B cell (primary cell): ENCODE measurements at regions of chr16 and their contacts with region 1.

Region 1: GRCh38 chr16:47460711-47461597 is at the starts of genes ITFG1 and PHKB:
- DNase-seq: peak; percentile 97
- ATAC-seq: peak; percentile 89
- H3K4me3 ChIP-seq: peak within 1 kb of the TSS; percentile 73 to 93 (median 88)
- H3K4me3 Mint-ChIP-seq: peak within 1 kb of the TSS; percentile 98
- H3K27ac ChIP-seq: peak within 1 kb of the TSS; percentile 94 to 97
- H3K27ac Mint-ChIP-seq: peak within 1 kb of the TSS; percentile 97
- H3K4me1 ChIP-seq: peaks cover 40 to 53% of the 10 kb centered on the region in 2 donors
- H3K4me1 Mint-ChIP-seq: peaks cover 68% of the 10 kb centered on the region
- H3K27me3 ChIP-seq: no peaks in the 10 kb centered on the region
- H3K27me3 Mint-ChIP-seq: no peaks in the 10 kb centered on the region
- CTCF ChIP-seq: no peak
- total RNA-seq, gene ITFG1: 40.4 and 47.5 TPM in 2 replicates
- total RNA-seq, gene PHKB: 223 and 228 TPM in 2 replicates

Region 2: GRCh38 chr16:47323241-47323640 is 137.7 kb before region 1 on chr16:
- CTCF ChIA-PET with region 1: no interaction called
- POLR2A ChIA-PET with region 1: no interaction called
- intact Hi-C with region 1: no loop called
- DNase-seq: no peak
- ATAC-seq: no peak
- H3K4me3 ChIP-seq: no peak overlapping the region
- H3K4me3 Mint-ChIP-seq: no peak overlapping the region
- H3K27ac ChIP-seq: no peak overlapping the region
- H3K27ac Mint-ChIP-seq: no peak overlapping the region
- H3K4me1 ChIP-seq: no peaks in the 10 kb centered on the region
- H3K4me1 Mint-ChIP-seq: no peaks in the 10 kb centered on the region
- H3K27me3 ChIP-seq: no peaks in the 10 kb centered on the region
- H3K27me3 Mint-ChIP-seq: no peaks in the 10 kb centered on the region
- CTCF ChIP-seq: no peak

Region 3: GRCh38 chr16:47481698-47482374 is 20.9 kb after region 1 on chr16:
- CTCF ChIA-PET with region 1: interaction called, 10 read pairs
- POLR2A ChIA-PET with region 1: interaction called, 12 read pairs
- intact Hi-C with region 1: loop called (anchors 1 kb)
- DNase-seq: no peak
- ATAC-seq: peak; percentile 89
- H3K4me3 ChIP-seq: no peak overlapping the region
- H3K4me3 Mint-ChIP-seq: peak overlapping the region; percentile 69
- H3K27ac ChIP-seq: peak overlapping the region in 1 of 2 donors; percentile 52
- H3K27ac Mint-ChIP-seq: peak overlapping the region; percentile 89
- H3K4me1 ChIP-seq: peaks cover 17 to 23% of the 10 kb centered on the region in 2 donors
- H3K4me1 Mint-ChIP-seq: peaks cover 54% of the 10 kb centered on the region
- H3K27me3 ChIP-seq: no peaks in the 10 kb centered on the region
- H3K27me3 Mint-ChIP-seq: no peaks in the 10 kb centered on the region
- CTCF ChIP-seq: no peak

Region 4: GRCh38 chr16:47492428-47493377 is 31.7 kb after region 1 on chr16:
- CTCF ChIA-PET with region 1: interaction called, 50 read pairs
- POLR2A ChIA-PET with region 1: interaction called, 41 read pairs
- intact Hi-C with region 1: loop called (anchors 1 kb)
- DNase-seq: peak; percentile 72
- ATAC-seq: peak; percentile 85
- H3K4me3 ChIP-seq: peak overlapping the region; percentile 19 to 71 (median 37)
- H3K4me3 Mint-ChIP-seq: peak overlapping the region; percentile 96
- H3K27ac ChIP-seq: peak overlapping the region; percentile 81 to 85
- H3K27ac Mint-ChIP-seq: peak overlapping the region; percentile 98
- H3K4me1 ChIP-seq: peaks cover 37 to 40% of the 10 kb centered on the region in 2 donors
- H3K4me1 Mint-ChIP-seq: peaks cover 55% of the 10 kb centered on the region
- H3K27me3 ChIP-seq: no peaks in the 10 kb centered on the region
- H3K27me3 Mint-ChIP-seq: no peaks in the 10 kb centered on the region
- CTCF ChIP-seq: no peak

Region 5: DNA sequence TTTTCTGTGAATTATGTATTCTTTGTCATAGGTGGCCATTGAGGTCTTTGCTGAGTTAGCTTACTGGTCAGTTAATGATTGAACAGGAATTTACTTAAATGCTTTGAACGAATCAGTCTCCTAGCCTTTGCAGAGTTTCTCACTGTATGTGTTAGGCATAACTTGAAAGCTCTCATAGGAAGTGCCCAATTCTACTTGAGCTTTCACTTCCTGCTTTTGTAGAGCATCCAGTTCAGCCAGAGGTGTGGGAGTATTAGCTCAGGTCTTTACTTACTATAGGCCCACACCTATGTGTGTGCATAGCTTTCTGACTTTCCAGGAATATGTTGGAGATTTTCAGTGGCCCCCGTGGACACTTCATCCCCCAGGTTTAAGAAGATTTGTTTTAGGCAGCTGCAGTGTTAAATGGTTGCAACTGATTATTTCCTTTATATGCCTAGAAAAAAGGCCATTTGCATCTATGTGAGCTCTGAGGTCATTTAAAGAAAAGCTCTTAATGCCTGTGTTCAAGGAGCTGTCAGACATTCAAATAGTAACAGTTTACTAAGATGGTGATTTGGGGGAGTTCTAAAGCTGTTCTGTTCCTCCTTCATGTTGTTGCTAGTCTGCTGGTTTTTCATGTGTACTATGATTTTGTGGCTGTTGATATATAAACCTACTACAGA is 62.5 kb after region 1 on chr16:
- CTCF ChIA-PET with region 1: interaction called, 3 read pairs
- POLR2A ChIA-PET with region 1: interaction called, 4 read pairs
- intact Hi-C with region 1: loop called (anchors 2 kb)
- DNase-seq: peak; percentile 69
- ATAC-seq: peak; percentile 98
- H3K4me3 ChIP-seq: no peak overlapping the region
- H3K4me3 Mint-ChIP-seq: peak overlapping the region; percentile 29
- H3K27ac ChIP-seq: peak overlapping the region; percentile 7 to 60
- H3K27ac Mint-ChIP-seq: peak overlapping the region; percentile 51
- H3K4me1 ChIP-seq: peaks cover 12 to 15% of the 10 kb centered on the region in 2 donors
- H3K4me1 Mint-ChIP-seq: peaks cover 14% of the 10 kb centered on the region
- H3K27me3 ChIP-seq: no peaks in the 10 kb centered on the region
- H3K27me3 Mint-ChIP-seq: no peaks in the 10 kb centered on the region
- CTCF ChIP-seq: no peak

Region 6: GRCh38 chr16:47565454-47565853 is 104.5 kb after region 1 on chr16:
- CTCF ChIA-PET with region 1: no interaction called
- POLR2A ChIA-PET with region 1: interaction called, 3 read pairs
- intact Hi-C with region 1: loop called (anchors 5 kb)
- DNase-seq: no peak
- ATAC-seq: no peak
- H3K4me3 ChIP-seq: no peak overlapping the region
- H3K4me3 Mint-ChIP-seq: no peak overlapping the region
- H3K27ac ChIP-seq: no peak overlapping the region
- H3K27ac Mint-ChIP-seq: no peak overlapping the region
- H3K4me1 ChIP-seq: peaks cover 6 to 19% of the 10 kb centered on the region in 2 donors
- H3K4me1 Mint-ChIP-seq: peaks cover 46% of the 10 kb centered on the region
- H3K27me3 ChIP-seq: no peaks in the 10 kb centered on the region
- H3K27me3 Mint-ChIP-seq: no peaks in the 10 kb centered on the region
- CTCF ChIP-seq: no peak

Region 7: GRCh38 chr16:47599512-47599911 is 138.6 kb after region 1 on chr16:
- CTCF ChIA-PET with region 1: no interaction called
- POLR2A ChIA-PET with region 1: interaction called, 7 read pairs
- intact Hi-C with region 1: loop called (anchors 5 kb)
- DNase-seq: peak; percentile 23
- ATAC-seq: no peak
- H3K4me3 ChIP-seq: no peak overlapping the region
- H3K4me3 Mint-ChIP-seq: peak overlapping the region; percentile 4
- H3K27ac ChIP-seq: peak overlapping the region in 1 of 2 donors; percentile 50
- H3K27ac Mint-ChIP-seq: peak overlapping the region; percentile 13
- H3K4me1 ChIP-seq: peaks cover 0 to 6% of the 10 kb centered on the region in 2 donors
- H3K4me1 Mint-ChIP-seq: peaks cover 15% of the 10 kb centered on the region
- H3K27me3 ChIP-seq: no peaks in the 10 kb centered on the region
- H3K27me3 Mint-ChIP-seq: no peaks in the 10 kb centered on the region
- CTCF ChIP-seq: no peak